ENCODE measurements at regions of chr5 and their contacts with region 1.

Region 1: GRCh38 chr5:9622971-9623421 is 7.2 kb downstream of the TAS2R1 start:
- DNase-seq: no peak
- H3K4me3 ChIP-seq: no peak overlapping the region
- H3K4me3 Mint-ChIP-seq: peak overlapping the region; percentile 7
- H3K27ac Mint-ChIP-seq: peak overlapping the region; percentile 90
- H3K4me1 ChIP-seq: peaks cover 51% of the 10 kb centered on the region
- H3K4me1 Mint-ChIP-seq: peaks cover 57% of the 10 kb centered on the region
- H3K27me3 ChIP-seq: no peaks in the 10 kb centered on the region
- H3K27me3 Mint-ChIP-seq: no peaks in the 10 kb centered on the region
- CTCF ChIP-seq: no peak

Region 2: DNA sequence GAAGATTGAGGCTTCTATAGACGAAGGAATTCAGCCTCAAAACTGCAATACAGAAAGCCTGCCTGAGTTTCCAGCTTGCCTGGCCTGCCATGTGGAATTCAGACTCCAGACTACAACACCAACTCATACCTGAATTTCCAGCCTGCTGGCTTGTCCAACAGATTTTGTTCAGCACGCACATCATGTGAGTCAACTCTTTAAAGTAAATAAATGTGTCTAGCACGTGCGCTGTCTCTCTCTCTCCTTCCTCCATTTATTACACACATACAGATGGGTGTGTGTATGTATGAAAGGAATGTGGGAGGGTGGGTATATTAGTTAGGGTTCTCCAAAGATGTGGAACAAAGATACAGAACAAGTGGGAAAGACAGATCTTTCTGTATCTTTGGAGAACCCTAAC is 89.5 kb after region 1 on chr5:
- CTCF ChIA-PET with region 1: no interaction called
- POLR2A ChIA-PET with region 1: no interaction called
- intact Hi-C with region 1: loop called (anchors 2 kb)
- DNase-seq: peak; percentile 49 to 65
- H3K4me3 ChIP-seq: no peak overlapping the region
- H3K4me3 Mint-ChIP-seq: no peak overlapping the region
- H3K27ac Mint-ChIP-seq: peak overlapping the region; percentile 34
- H3K4me1 ChIP-seq: peaks cover 22% of the 10 kb centered on the region
- H3K4me1 Mint-ChIP-seq: peaks cover 33% of the 10 kb centered on the region
- H3K27me3 ChIP-seq: no peaks in the 10 kb centered on the region
- H3K27me3 Mint-ChIP-seq: no peaks in the 10 kb centered on the region
- CTCF ChIP-seq: no peak

Region 3: GRCh38 chr5:9787861-9788600 is 165.0 kb after region 1 on chr5:
- CTCF ChIA-PET with region 1: no interaction called
- POLR2A ChIA-PET with region 1: no interaction called
- intact Hi-C with region 1: loop called (anchors 2 kb)
- DNase-seq: peak in 1 of 2 experiments; percentile 26
- H3K4me3 ChIP-seq: no peak overlapping the region
- H3K4me3 Mint-ChIP-seq: no peak overlapping the region
- H3K27ac Mint-ChIP-seq: no peak overlapping the region
- H3K4me1 ChIP-seq: peaks cover 17% of the 10 kb centered on the region
- H3K4me1 Mint-ChIP-seq: peaks cover 14% of the 10 kb centered on the region
- H3K27me3 ChIP-seq: no peaks in the 10 kb centered on the region
- H3K27me3 Mint-ChIP-seq: no peaks in the 10 kb centered on the region
- CTCF ChIP-seq: no peak